ENCODE measurements at regions of chr6 and their contacts with region 1.

Region 1: DNA sequence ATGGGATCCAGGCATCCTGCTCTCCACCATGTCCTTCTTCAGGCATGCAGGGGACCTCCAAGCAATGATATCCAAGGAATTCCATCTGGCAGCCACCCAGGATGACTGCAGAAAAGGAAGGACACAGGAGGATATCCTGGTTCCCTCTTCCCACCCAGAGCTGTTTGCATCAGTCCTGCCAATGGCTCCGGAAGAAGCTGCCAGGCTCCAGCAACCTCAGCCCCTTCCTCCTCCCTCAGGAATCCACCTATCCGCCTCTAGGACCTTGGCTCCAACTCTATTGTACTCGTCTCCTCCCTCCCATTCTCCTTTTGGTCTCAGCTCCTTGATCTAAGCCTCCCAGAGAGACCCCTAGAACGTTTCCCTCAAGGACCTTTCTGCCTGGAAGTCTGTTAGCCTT is 733 bp upstream of the PSORS1C2 start:
- DNase-seq: no peak

Region 2: DNA sequence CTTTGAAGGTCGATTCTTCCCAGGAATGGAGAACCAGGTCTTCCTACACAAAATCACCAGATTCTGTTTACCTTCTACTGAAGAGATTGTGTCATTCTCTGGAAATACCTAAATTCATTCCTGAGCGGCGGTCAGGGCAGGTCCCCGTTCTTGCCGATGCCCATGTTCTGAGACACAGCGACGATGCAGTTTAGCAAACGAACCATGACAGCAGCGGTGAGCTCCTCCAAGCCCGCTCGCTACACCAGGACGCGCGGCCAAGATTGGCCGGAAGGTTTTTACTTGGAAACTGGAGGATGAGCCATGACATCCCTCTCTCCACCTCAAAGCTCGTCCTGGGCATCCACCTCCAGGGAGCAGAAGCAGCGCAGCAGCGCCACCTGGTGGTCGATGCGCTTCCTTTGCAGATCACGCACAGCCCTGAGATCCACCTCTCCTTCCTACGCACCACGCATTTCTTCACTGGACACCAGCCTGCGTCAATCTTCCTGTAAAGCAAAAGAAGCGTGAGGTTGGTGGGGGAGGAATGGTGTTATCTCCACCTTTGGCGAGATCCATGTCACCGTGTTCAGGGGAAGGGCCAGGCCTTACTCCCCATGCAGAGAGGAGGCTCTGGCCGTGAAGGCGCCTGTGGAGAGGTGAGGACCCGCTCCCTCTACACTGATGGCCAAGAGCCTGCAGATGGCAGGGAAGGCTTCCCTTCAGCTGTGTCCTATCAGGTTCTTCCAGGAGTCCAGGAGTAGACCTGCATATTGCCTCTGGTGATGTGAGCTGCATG is 227.3 kb after region 1 on chr6:
- intact Hi-C with region 1: loop called (anchors 2 kb)
- DNase-seq: peak; percentile 94